Activated CD4-positive, alpha-beta T cell treated with anti-CD3 and anti-CD28 coated beads for 36 hours (primary cell): ENCODE measurements at regions of chr11 and their contacts with region 1.

Region 1: DNA sequence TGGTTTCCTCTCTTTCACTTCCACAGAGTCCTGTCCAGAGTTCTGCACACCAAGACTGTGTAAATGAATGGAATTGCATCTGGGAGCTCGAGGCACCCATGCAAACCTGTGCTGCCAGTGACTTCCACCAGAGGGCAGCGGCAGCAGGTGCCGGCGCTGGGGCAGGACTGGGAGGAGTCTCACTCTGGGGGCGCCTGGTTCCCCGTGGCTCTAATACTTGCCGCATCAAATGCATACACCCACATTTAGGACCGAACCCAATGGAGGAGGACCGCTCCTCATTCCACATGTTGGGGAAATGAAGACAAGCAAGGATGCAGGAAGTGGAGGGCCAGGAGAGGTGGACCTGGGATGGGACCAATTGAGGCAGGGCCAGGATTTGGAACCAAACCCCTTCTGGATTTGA is 1.1 kb upstream of the CD6 start:
- DNase-seq: peak; percentile 91
- ATAC-seq: peak; percentile 51
- H3K4me3 Mint-ChIP-seq: peak overlapping the region; percentile 87
- H3K27ac Mint-ChIP-seq: peak overlapping the region; percentile 98
- H3K4me1 Mint-ChIP-seq: peaks cover 16% of the 10 kb centered on the region
- H3K27me3 Mint-ChIP-seq: peaks cover 2% of the 10 kb centered on the region

Region 2: GRCh38 chr11:60951899-60952741 is 18.3 kb before region 1 on chr11 and contains the start of gene SLC15A3:
- CTCF ChIA-PET with region 1: interaction called, 6 read pairs
- POLR2A ChIA-PET with region 1: interaction called, 4 read pairs
- intact Hi-C with region 1: loop called in 1 of 2 experiments (anchors 1 kb)
- DNase-seq: peak; percentile 52
- ATAC-seq: peak; percentile 71
- H3K4me3 Mint-ChIP-seq: peak within 1 kb of the TSS; percentile 75
- H3K27ac Mint-ChIP-seq: peak within 1 kb of the TSS; percentile 85
- H3K4me1 Mint-ChIP-seq: peaks cover 21% of the 10 kb centered on the region
- H3K27me3 Mint-ChIP-seq: peaks cover 7% of the 10 kb centered on the region
- total RNA-seq, gene SLC15A3: 7.0 to 9.6 TPM

Region 3: DNA sequence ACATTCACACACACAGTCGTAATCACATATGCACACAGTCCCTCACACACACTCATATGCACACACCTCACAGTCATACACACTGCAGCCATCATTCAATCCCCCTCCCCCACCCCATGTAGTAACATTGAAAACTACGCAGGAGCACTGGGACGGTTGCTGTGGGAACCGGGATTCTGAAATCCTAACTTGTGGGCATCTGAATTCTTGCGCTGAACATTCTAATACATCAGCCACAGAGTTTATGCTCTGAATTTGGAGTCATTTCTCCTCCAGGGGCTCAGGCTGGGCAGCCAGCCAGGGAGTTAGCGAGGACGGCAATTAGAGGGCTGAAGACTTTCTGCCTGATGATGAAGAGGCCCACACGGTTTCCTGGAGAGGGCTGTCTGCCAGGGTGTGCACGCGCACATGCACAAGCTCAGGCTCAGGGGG is 33.8 kb after region 1 on chr11:
- CTCF ChIA-PET with region 1: interaction called, 3 read pairs
- POLR2A ChIA-PET with region 1: interaction called, 4 read pairs
- intact Hi-C with region 1: loop called in 1 of 2 experiments (anchors 1 kb)
- DNase-seq: peak; percentile 78
- ATAC-seq: peak; percentile 58
- H3K4me3 Mint-ChIP-seq: peak overlapping the region; percentile 74
- H3K27ac Mint-ChIP-seq: peak overlapping the region; percentile 94
- H3K4me1 Mint-ChIP-seq: peaks cover 90% of the 10 kb centered on the region
- H3K27me3 Mint-ChIP-seq: no peaks in the 10 kb centered on the region

Region 4: DNA sequence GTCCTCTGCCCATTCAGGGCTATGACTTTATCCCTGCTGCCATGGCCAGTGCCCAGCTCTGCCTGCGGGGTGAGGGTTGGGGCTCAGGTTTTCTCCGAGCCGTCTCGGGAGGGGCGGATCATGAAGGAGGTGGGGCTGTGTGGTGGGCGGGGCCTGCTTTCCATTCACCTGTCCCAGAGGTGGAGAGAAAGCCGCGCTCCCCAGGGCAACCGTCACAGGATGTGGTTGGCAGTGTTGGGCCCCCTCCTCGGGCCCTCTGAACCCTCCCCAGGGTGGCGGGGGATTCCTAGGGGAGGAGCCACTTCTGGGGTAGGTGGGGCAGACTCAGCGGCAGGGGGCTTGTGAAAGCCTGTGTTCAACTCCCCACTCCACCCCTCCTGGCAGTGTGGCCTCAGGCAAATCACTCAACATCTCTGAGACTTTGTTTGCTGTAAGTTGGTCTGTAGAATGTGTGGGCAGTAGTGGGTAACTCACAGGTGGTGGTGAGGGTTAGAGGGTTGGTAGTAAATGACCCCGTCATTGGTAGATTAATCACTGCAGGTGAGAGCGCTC is 51.4 kb after region 1 on chr11:
- CTCF ChIA-PET with region 1: interaction called, 5 read pairs
- POLR2A ChIA-PET with region 1: interaction called, 4 read pairs
- intact Hi-C with region 1: loop called (anchors 1 to 2 kb)
- DNase-seq: peak; percentile 94
- ATAC-seq: peak; percentile 50
- H3K4me3 Mint-ChIP-seq: peak overlapping the region; percentile 79
- H3K27ac Mint-ChIP-seq: peak overlapping the region; percentile 97
- H3K4me1 Mint-ChIP-seq: peaks cover 92% of the 10 kb centered on the region
- H3K27me3 Mint-ChIP-seq: no peaks in the 10 kb centered on the region

Region 5: DNA sequence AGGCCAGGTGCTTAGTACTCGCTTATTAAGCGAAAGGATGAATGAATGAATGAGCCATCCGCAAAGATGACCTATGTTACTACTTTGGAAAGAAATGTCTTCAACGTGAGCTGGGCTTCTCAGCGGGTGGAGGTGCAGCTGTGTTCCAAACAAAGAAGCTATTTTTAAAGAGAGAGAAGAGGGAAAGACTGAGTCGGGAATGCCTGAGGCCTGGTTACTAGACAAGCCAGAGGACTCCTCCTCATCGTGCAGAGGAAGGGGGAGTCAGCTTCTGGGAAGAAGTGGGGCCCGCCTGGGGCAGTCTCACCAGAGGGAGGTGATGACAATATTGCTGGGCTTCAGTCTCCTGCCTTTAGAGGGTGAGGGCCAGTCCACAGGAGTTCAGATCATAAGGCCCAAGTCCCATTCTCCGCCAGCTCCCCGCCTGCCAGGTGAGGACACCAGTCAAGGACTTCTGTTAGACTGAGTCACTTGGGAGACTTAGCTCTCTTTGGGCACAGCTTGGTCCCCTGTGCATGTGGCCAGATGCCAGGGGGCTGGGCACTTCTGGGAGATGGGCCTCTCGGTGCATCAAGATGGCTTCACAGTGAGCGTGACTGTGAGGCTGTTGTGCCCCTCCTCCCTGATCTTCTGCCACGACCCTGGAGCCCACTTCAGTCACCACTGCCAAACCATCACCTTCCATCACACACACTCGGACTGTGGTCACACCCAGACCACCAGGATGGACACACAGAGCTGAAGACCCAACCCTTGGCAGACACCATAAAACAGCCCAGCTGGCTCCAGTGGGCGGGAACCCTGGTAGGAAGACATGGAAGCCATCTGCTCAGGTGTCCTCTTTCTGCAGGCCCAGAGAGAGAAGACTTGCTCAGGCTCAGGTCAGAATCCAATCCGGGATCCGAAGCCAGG is 101.8 kb after region 1 on chr11:
- CTCF ChIA-PET with region 1: no interaction called
- POLR2A ChIA-PET with region 1: no interaction called
- intact Hi-C with region 1: no loop called
- DNase-seq: peak; percentile 26
- ATAC-seq: no peak
- H3K4me3 Mint-ChIP-seq: peak overlapping the region; percentile 44
- H3K27ac Mint-ChIP-seq: peak overlapping the region; percentile 93
- H3K4me1 Mint-ChIP-seq: peaks cover 93% of the 10 kb centered on the region
- H3K27me3 Mint-ChIP-seq: no peaks in the 10 kb centered on the region